Gastrocnemius medialis (tissue), 4 donors: ENCODE measurements at regions of chr7 and their contacts with region 1.

Region 1: DNA sequence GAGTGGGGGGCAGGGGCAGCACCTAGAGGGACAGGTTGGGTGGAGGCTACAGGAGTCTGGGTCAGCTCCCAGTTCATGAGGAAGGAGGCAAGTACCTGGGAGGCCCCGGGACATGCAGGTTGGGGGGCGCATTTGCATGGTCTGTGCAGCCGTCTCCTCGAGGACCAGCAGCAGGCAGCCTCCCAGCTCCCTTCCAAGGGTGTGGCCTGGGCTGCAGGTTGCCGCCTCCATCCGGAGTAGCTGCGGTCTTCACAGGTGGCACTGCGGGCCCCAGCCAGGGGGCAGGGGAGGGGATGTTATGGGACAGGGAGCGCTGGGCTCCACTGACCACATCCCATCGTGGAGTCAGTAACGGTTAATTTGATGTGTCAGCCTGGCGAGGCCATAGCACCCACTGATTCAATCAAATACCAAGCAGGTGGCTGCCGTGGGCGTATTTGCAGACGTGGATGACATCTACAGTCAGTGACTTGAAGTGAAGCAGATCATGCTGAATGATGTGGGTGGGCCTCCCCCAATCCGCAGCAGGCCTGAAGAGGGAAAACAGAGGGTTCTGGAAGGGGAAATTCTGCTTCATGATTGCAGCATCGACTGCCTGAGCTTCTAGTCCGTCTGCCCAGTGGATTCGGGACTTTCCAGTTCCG is 81.6 kb downstream of the PRKAG2 start:
- DNase-seq: no peak
- ATAC-seq: no peak
- H3K4me3 ChIP-seq: no peak overlapping the region
- H3K27ac ChIP-seq: peak overlapping the region in 3 of 4 donors; percentile 62 to 67 (median 64)
- H3K4me1 ChIP-seq: peaks cover 12 to 38% of the 10 kb centered on the region in 2 donors
- H3K27me3 ChIP-seq: no peaks in the 10 kb centered on the region
- CTCF ChIP-seq: no peak
- POLR2A ChIP-seq: no peak

Region 2: GRCh38 chr7:151876899-151877777 is 81.8 kb after region 1 on chr7 and contains the start of gene PRKAG2:
- in situ Hi-C with region 1: no loop called
- intact Hi-C with region 1: loop called (anchors 2 kb)
- DNase-seq: peak; percentile 46 to 55
- ATAC-seq: peak; percentile 49 to 51
- H3K4me3 ChIP-seq: peak within 1 kb of the TSS; percentile 76 to 97 (median 86)
- H3K27ac ChIP-seq: peak within 1 kb of the TSS; percentile 87 to 93 (median 90)
- H3K4me1 ChIP-seq: peaks cover 8 to 18% of the 10 kb centered on the region in 2 donors
- H3K27me3 ChIP-seq: no peaks in the 10 kb centered on the region
- CTCF ChIP-seq: peak in 2 of 5 experiments; percentile 20 to 21
- POLR2A ChIP-seq: peak; percentile 49 to 59
- total RNA-seq, gene PRKAG2: 5.3 to 32.6 (median 13.9) TPM

Region 3: DNA sequence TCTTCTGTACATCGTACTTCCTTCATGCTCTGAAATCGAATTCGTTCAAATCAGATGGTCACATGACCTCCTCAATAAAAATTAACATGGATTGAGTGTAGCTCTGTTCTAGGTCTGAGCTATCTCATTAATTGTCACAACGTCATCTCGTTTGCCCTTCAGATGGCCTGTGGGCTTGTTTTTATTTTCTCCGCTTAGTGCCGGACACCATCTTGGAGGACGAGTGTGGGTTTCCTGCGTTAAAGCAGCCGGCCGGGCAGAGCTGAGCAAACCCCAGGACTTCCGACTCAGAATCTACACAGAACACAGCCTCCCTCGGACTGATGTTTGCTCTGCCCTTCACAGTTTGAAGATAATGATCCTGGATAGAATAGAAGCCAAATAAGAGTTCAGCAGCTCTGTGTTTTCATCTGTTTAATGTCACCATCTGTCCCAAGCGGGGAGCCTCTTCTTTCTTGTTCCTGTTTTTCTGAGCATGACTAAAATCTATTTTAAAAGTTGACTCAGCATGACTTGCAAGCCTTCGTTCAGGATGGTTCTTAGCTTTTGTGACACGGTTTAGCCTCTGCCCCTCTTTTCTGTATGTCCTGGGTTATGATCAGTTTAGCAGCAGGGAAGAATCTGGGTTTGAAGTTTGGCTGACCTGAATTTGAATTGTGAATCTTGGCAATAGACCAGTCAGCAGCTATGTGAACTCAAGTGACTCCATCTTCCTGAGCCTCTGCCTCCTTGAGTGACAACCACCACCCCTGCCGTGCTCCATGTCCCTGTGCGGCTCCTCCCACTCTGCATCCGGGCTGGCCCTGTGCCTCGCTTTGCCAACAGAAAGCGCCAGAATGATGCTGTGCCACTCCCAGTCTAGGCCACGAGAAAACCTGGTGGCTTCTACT is 130.4 kb after region 1 on chr7:
- in situ Hi-C with region 1: loop called in 1 of 4 experiments (anchors 25 kb)
- intact Hi-C with region 1: loop called (anchors 5 kb)
- DNase-seq: peak; percentile 49 to 69
- ATAC-seq: peak; percentile 72 to 83
- H3K4me3 ChIP-seq: peak overlapping the region in 1 of 4 donors; percentile 4
- H3K27ac ChIP-seq: peak overlapping the region in 3 of 4 donors; percentile 55 to 69 (median 62)
- H3K4me1 ChIP-seq: peaks cover 0 to 10% of the 10 kb centered on the region in 2 donors
- H3K27me3 ChIP-seq: no peaks in the 10 kb centered on the region
- CTCF ChIP-seq: no peak
- POLR2A ChIP-seq: peak in 1 of 2 donors; percentile 31

Region 4: GRCh38 chr7:152025077-152025936 is 230.0 kb after region 1 on chr7 and contains the start of gene GALNT11:
- in situ Hi-C with region 1: no loop called
- intact Hi-C with region 1: loop called (anchors 5 kb)
- DNase-seq: peak; percentile 63 to 81
- ATAC-seq: peak; percentile 96 to 97
- H3K4me3 ChIP-seq: peak within 1 kb of the TSS; percentile 65 to 80 (median 74)
- H3K27ac ChIP-seq: peak within 1 kb of the TSS; percentile 69 to 92 (median 83)
- H3K4me1 ChIP-seq: peaks cover 11 to 12% of the 10 kb centered on the region in 2 donors
- H3K27me3 ChIP-seq: no peaks in the 10 kb centered on the region
- CTCF ChIP-seq: peak; percentile 19 to 56 (median 49)
- POLR2A ChIP-seq: peak; percentile 88 to 89
- total RNA-seq, gene GALNT11: 16.3 to 49.1 (median 20.1) TPM